ENCODE measurements at regions of chr12 and their contacts with region 1.

Region 1: DNA sequence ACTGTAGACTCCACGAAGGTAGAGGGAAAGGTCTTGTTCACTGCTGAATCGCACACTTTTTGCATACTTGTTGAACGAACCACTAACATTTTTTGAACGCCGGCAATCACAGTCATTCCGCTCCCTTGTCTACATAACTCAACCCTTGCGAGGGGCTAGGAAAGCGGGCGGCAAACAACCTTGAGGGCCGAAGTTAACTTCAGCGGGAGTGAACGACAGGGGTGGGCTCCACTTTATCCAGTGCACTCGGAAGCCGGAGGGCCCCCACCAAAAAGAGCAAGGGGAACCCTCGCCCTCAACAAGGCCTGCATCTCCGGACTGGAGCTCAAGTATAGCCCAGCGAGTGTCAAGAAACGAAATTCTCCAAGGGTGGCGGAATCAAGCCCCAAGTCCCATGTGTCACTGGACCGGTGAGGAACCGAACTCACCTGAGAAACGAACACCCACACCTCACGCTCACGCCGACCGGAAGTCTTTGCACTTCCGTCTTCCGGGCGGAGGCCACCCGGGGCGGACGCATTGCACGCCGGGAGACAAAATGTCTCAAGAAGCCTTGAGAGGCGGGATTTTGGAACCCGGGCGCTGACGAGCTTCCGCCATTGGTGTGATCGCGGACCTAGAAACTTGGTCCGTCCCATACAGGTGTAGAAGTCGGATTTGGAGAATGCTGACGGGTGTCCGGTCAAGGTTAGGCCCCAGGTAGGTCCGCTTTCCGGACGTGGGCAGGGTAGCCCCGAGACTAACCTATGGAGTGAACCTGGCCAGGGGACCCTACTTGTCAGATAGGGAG is at the start of gene LLPH:
- DNase-seq: peak; percentile 94
- H3K4me3 Mint-ChIP-seq: peak within 1 kb of the TSS; percentile 97
- H3K27ac Mint-ChIP-seq: peak within 1 kb of the TSS; percentile 94
- H3K4me1 Mint-ChIP-seq: peaks cover 67% of the 10 kb centered on the region
- H3K27me3 Mint-ChIP-seq: no peaks in the 10 kb centered on the region
- total RNA-seq, gene LLPH: 30.0 to 33.3 TPM

Region 2: DNA sequence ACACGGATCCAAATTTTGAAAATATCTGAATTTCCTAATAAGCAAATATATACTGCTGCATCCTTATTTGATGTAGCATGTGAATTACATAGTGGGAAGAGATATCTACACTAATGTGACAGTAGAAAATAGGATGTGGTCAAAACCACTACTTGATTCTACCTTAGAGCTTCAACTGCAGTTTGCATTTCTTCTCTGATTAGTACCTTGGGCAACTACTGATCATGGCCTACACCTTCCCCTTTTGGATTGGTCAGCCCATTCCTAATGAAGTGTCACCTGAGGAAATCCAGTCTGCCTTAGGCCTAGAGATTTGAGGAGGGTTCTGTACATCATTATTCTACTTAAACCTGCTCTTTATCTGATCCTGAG is 10.6 kb before region 1 on chr12:
- CTCF ChIA-PET with region 1: interaction called, 3 read pairs
- POLR2A ChIA-PET with region 1: interaction called, 38 read pairs
- DNase-seq: no peak
- H3K4me3 Mint-ChIP-seq: no peak overlapping the region
- H3K27ac Mint-ChIP-seq: no peak overlapping the region
- H3K4me1 Mint-ChIP-seq: peaks cover 18% of the 10 kb centered on the region
- H3K27me3 Mint-ChIP-seq: no peaks in the 10 kb centered on the region

Region 3: GRCh38 chr12:66144791-66145754 is 14.6 kb after region 1 on chr12:
- CTCF ChIA-PET with region 1: interaction called, 9 read pairs
- POLR2A ChIA-PET with region 1: interaction called, 32 read pairs
- DNase-seq: no peak
- H3K4me3 Mint-ChIP-seq: no peak overlapping the region
- H3K27ac Mint-ChIP-seq: peak overlapping the region; percentile 74
- H3K4me1 Mint-ChIP-seq: peaks cover 21% of the 10 kb centered on the region
- H3K27me3 Mint-ChIP-seq: no peaks in the 10 kb centered on the region

Region 4: DNA sequence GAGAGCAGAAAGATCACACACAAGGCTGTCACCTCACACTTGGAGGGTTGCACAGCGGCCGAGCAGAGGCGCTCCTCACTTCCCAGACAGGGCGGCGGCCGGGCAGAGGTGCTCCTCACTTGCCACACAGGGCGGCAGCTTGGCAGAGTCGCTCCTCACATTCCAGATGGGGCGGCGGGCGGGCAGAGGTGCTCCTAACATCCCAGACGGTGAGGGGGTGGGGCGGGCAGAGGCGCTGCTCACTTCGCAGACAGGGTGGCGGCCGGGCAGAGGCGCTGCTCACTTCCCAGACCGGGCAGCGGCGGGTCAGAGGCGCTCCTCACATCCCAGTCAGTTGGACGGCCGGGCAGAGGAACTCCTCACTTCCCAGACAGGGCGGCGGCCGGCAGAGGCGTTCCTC is 30.2 kb after region 1 on chr12:
- CTCF ChIA-PET with region 1: no interaction called
- POLR2A ChIA-PET with region 1: interaction called, 10 read pairs
- DNase-seq: no peak
- H3K4me3 Mint-ChIP-seq: no peak overlapping the region
- H3K27ac Mint-ChIP-seq: no peak overlapping the region
- H3K4me1 Mint-ChIP-seq: peaks cover 18% of the 10 kb centered on the region
- H3K27me3 Mint-ChIP-seq: no peaks in the 10 kb centered on the region

Measured in activated CD4-positive, alpha-beta memory T cell treated with anti-CD3 and anti-CD28 coated beads, Interleukin-2, amount 10 ng/mL, durations not matched to agents 7 days and 5 days (primary cell).